Adrenal gland (tissue), 19 donors: ENCODE measurements at regions of chr11 and their contacts with region 1.

Region 1: DNA sequence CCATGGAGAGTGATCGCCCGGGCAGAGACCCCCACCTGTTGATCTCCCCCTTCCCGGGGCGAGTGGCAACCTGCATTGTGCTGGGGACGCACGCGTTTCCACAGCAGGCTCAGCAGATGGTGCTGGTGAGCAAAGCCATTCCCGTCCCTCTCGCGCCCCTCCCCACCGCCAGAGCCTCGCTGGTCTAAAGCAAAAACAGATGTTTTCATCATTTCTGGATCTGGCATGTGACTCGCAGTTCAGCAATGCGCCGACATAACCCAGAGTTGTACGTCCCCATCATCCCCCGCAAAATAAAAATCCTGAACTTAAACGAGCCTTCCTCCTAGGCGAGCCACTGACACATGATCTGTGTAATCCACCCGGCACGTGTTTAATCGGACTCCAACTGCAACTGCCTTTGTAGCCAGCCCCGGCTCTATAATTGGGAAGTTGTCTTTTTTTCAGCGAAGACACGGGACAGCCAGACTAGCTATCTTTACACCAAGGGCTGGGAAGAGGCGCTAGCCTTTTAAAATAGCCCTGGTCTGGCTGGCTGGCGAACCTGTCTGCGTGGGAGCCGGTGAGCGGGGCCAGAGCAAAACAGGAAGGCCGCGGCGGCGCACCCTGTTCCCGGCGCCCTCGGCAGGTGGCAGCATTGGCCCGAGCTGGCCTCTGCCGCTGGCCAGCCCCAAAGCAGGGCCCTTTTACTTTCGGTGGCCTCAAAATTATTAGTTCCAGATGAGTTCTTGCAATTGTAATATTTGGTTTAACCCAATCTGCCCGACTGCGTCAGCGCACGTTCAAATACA is 203.0 kb upstream of the SORL1-AS1 start:
- DNase-seq: peak; percentile 83 to 93 (median 87)
- H3K4me3 ChIP-seq: peak overlapping the region in 3 of 4 donors; percentile 13 to 43 (median 27)
- H3K27ac ChIP-seq: peak overlapping the region; percentile 80 to 94 (median 83)
- H3K4me1 ChIP-seq: peaks cover 0 to 15% of the 10 kb centered on the region in 2 donors
- H3K27me3 ChIP-seq: no peaks in the 10 kb centered on the region
- CTCF ChIP-seq: peak; percentile 77 to 95 (median 88)
- POLR2A ChIP-seq: peak in 1 of 2 donors; percentile 5

Region 2: DNA sequence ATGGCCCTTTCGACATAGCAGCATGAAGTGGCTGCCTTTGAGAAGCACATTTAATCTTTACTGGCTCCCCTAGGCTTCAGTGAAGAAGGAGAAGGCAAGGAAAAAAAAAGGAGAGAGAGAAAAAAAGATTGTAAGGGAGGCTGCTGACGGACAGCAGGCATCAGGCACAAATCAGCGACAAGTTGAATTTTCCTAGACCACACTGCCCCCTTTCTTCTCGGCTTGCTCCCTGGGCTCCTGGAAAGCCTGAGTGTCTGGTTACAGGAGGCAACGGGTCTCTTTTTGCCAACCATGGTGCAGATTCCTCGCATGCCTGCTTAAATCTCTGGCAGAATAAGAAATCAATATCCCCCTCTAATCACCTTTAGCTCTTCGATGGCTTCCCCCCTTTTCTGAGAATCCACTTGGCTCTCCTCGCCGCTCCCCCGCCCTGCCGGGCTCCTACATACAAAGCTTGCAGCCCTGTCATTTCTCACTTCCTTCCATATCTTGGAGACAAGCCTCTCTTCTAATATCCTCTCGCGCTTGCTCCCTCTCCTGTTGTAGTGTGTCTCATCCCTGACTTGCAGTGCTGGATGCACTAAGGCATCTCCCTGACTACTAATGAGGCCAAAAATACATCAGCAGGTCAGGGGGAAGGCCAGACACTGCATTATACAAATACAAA is 446.0 kb after region 1 on chr11:
- intact Hi-C with region 1: loop called in 1 of 2 experiments (anchors 5 kb)
- DNase-seq: peak; percentile 53 to 91 (median 69)
- H3K4me3 ChIP-seq: peak overlapping the region in 2 of 4 donors; percentile 20 to 47
- H3K27ac ChIP-seq: peak overlapping the region; percentile 7 to 89 (median 72)
- H3K4me1 ChIP-seq: peaks cover 0 to 8% of the 10 kb centered on the region in 2 donors
- H3K27me3 ChIP-seq: no peaks in the 10 kb centered on the region
- CTCF ChIP-seq: peak; percentile 20 to 71 (median 57)
- POLR2A ChIP-seq: peak in 1 of 2 donors; percentile 32

Region 3: DNA sequence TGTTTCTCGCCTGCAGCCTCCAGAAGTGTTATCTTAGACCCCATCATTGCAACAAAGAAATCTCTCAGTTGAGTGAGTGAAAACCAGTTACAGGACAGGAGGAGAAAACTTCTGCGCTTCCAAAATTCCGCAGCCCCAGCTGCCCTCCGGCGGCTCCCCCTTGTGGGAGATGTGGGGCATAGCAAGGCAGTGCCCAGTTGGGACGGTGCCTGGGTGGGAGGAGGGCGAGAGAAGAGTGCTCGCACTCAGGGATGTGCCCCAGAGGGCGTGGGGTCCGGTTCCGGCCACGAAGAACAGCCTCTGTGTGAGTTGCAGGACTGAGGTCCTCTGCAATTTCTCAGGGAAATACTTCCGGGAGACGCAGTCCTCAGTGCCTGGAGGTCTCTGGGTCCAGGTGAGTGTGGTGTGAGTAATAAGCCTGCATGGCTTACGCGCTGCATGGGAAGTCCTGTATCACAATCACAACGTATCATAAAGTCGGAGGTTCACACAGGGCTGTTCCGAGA is 547.3 kb after region 1 on chr11:
- intact Hi-C with region 1: loop called (anchors 5 kb)
- DNase-seq: peak; percentile 57 to 80 (median 66)
- H3K4me3 ChIP-seq: peak overlapping the region in 1 of 4 donors; percentile 34
- H3K27ac ChIP-seq: peak overlapping the region in 1 of 5 donors; percentile 46
- H3K4me1 ChIP-seq: no peaks in the 10 kb centered on the region
- H3K27me3 ChIP-seq: no peaks in the 10 kb centered on the region
- CTCF ChIP-seq: peak; percentile 89 to 98 (median 92)
- POLR2A ChIP-seq: no peak

Region 4: GRCh38 chr11:122505304-122506006 is 849.7 kb after region 1 on chr11:
- intact Hi-C with region 1: loop called (anchors 5 kb)
- DNase-seq: peak; percentile 83 to 96 (median 89)
- H3K4me3 ChIP-seq: no peak overlapping the region
- H3K27ac ChIP-seq: no peak overlapping the region
- H3K4me1 ChIP-seq: no peaks in the 10 kb centered on the region
- H3K27me3 ChIP-seq: no peaks in the 10 kb centered on the region
- CTCF ChIP-seq: peak; percentile 56 to 97 (median 90)
- POLR2A ChIP-seq: no peak